Right lobe of liver (tissue), 6 donors: ENCODE measurements at regions of chr10 and their contacts with region 1.

Region 1: GRCh38 chr10:129971381-129972144 is 7.5 kb upstream of the EBF3 start:
- DNase-seq: peak in 1 of 3 donors; percentile 63
- ATAC-seq: peak; percentile 89 to 96 (median 94)
- H3K4me3 ChIP-seq: no peak overlapping the region
- H3K27ac ChIP-seq: no peak overlapping the region
- H3K4me1 ChIP-seq: peaks cover 0 to 46% (median 0%) of the 10 kb centered on the region in 4 donors
- H3K27me3 ChIP-seq: peaks cover 31 to 65% of the 10 kb centered on the region in 2 donors
- CTCF ChIP-seq: peak; percentile 35 to 85 (median 46)
- POLR2A ChIP-seq: no peak

Region 2: DNA sequence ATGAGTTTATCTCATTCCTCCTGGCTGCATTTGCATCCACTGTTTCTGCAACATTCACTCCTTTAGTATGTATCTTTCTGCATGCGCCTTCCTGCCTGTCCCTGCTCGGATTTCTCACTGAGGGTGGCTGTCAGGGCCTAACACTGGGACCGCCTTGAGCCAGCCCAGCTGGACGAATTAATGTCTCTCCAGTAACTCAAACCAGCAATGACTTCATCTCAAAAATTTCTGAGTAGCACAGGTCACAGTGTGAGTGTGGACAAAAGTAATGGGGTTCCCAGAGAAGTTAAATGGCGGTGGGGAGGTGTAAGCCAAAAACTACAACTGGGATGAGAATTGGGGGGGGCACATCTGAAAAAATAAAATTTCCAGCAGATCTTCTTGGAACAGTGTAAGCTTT is 948.5 kb before region 1 on chr10:
- intact Hi-C with region 1: loop called (anchors 5 to 10 kb)
- DNase-seq: no peak
- ATAC-seq: peak in 1 of 4 donors; percentile 22
- H3K4me3 ChIP-seq: no peak overlapping the region
- H3K27ac ChIP-seq: no peak overlapping the region
- H3K4me1 ChIP-seq: no peaks in the 10 kb centered on the region
- H3K27me3 ChIP-seq: no peaks in the 10 kb centered on the region
- CTCF ChIP-seq: no peak
- POLR2A ChIP-seq: no peak

Region 3: GRCh38 chr10:129704786-129705525 is 266.6 kb before region 1 on chr10:
- intact Hi-C with region 1: loop called in 1 of 2 experiments (anchors 5 kb)
- DNase-seq: no peak
- ATAC-seq: no peak
- H3K4me3 ChIP-seq: no peak overlapping the region
- H3K27ac ChIP-seq: no peak overlapping the region
- H3K4me1 ChIP-seq: peaks cover 0 to 30% (median 12%) of the 10 kb centered on the region in 4 donors
- H3K27me3 ChIP-seq: no peaks in the 10 kb centered on the region
- CTCF ChIP-seq: no peak
- POLR2A ChIP-seq: no peak